Mammary epithelial cell (primary cell): ENCODE measurements at regions of chr6 and their contacts with region 1.

Region 1: DNA sequence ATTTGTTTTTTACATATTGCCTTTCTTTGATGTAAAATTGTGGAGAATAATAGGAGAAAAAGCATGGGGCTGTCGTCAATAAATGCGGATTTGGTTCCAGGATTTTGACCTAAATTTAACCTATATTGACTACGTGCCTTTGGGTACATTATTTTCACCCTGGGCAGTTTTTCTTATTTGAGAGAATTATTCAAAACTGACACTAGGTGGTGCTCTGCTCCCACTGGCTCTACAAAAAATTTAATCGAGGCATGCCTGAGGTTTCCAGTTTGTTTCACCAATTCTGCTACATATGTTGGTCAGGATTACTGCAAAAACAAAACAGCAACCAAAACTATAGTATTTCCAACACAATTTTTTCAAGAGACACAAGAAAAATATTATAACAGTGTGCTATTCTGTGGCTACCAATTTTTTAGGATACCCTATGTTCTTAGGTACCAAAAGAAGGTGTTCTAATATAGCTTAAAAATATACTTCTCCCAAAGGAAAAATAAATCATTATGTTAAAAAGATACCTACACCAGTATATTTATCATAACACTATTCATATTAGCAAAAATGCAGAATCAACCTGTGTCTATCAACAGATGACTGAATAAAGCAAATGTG is 48.6 kb upstream of the FABP7 start:
- DNase-seq: peak; percentile 29
- H3K4me3 ChIP-seq: no peak overlapping the region
- H3K27ac ChIP-seq: no peak overlapping the region
- H3K4me1 ChIP-seq: peaks cover 9% of the 10 kb centered on the region
- H3K27me3 ChIP-seq: no peaks in the 10 kb centered on the region
- CTCF ChIP-seq: peak; percentile 63 to 76

Region 2: GRCh38 chr6:122491919-122492555 is 238.8 kb before region 1 on chr6:
- CTCF ChIA-PET with region 1: interaction called, 3 read pairs
- dilution Hi-C with region 1: no loop called
- in situ Hi-C with region 1: loop called in 1 of 2 experiments (anchors 10 kb)
- intact Hi-C with region 1: loop called (anchors 1 kb)
- DNase-seq: peak; percentile 60
- H3K4me3 ChIP-seq: no peak overlapping the region
- H3K27ac ChIP-seq: no peak overlapping the region
- H3K4me1 ChIP-seq: no peaks in the 10 kb centered on the region
- H3K27me3 ChIP-seq: no peaks in the 10 kb centered on the region
- CTCF ChIP-seq: peak; percentile 91 to 93

Region 3: GRCh38 chr6:122609856-122610689 is 120.8 kb before region 1 on chr6 and contains the start of gene PKIB:
- CTCF ChIA-PET with region 1: interaction called, 15 read pairs
- dilution Hi-C with region 1: no loop called
- in situ Hi-C with region 1: loop called in 1 of 2 experiments (anchors 10 kb)
- intact Hi-C with region 1: loop called (anchors 1 kb)
- DNase-seq: peak; percentile 87
- H3K4me3 ChIP-seq: peak within 1 kb of the TSS; percentile 78 to 88 (median 80)
- H3K27ac ChIP-seq: peak within 1 kb of the TSS; percentile 42
- H3K4me1 ChIP-seq: peaks cover 14% of the 10 kb centered on the region
- H3K27me3 ChIP-seq: no peaks in the 10 kb centered on the region
- CTCF ChIP-seq: peak; percentile 43 to 76
- total RNA-seq, gene PKIB: 1.8 to 24.2 TPM

Region 4: DNA sequence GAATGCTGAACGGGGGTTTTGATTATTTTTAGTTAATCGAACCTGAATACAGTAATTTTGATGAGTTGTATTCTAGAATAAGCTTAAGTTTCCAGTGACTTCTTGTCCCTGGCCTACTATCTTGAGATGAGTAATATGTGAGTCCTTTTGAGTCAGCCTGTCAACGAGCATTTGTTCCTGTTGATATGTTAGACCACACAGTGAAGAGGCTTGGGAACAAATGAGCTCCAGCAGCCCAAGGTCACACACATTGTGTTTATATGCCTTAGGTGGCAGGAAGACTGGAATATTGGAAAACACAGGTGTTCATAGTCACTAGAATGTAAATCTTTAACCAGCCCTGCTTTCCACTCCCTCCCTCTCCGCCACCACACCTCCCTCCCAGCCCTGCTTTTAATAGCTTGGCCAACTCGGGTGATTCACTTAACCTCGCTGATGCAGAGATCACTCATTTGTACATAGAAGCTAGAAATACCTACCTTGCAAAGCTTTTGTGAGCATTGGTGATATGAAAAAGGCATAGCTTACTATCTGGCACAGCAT is 67.3 kb after region 1 on chr6:
- CTCF ChIA-PET with region 1: interaction called, 4 read pairs
- dilution Hi-C with region 1: no loop called
- in situ Hi-C with region 1: no loop called
- intact Hi-C with region 1: loop called (anchors 2 kb)
- DNase-seq: peak; percentile 87
- H3K4me3 ChIP-seq: no peak overlapping the region
- H3K27ac ChIP-seq: peak overlapping the region; percentile 45
- H3K4me1 ChIP-seq: peaks cover 36% of the 10 kb centered on the region
- H3K27me3 ChIP-seq: no peaks in the 10 kb centered on the region
- CTCF ChIP-seq: no peak

Region 5: GRCh38 chr6:123316733-123317323 is 585.9 kb after region 1 on chr6:
- CTCF ChIA-PET with region 1: no interaction called
- dilution Hi-C with region 1: no loop called
- in situ Hi-C with region 1: no loop called
- intact Hi-C with region 1: loop called (anchors 5 kb)
- DNase-seq: no peak
- H3K4me3 ChIP-seq: no peak overlapping the region
- H3K27ac ChIP-seq: no peak overlapping the region
- H3K4me1 ChIP-seq: no peaks in the 10 kb centered on the region
- H3K27me3 ChIP-seq: no peaks in the 10 kb centered on the region
- CTCF ChIP-seq: peak; percentile 35 to 45